ENCODE measurements at regions of chr1 and their contacts with region 1.

Region 1: DNA sequence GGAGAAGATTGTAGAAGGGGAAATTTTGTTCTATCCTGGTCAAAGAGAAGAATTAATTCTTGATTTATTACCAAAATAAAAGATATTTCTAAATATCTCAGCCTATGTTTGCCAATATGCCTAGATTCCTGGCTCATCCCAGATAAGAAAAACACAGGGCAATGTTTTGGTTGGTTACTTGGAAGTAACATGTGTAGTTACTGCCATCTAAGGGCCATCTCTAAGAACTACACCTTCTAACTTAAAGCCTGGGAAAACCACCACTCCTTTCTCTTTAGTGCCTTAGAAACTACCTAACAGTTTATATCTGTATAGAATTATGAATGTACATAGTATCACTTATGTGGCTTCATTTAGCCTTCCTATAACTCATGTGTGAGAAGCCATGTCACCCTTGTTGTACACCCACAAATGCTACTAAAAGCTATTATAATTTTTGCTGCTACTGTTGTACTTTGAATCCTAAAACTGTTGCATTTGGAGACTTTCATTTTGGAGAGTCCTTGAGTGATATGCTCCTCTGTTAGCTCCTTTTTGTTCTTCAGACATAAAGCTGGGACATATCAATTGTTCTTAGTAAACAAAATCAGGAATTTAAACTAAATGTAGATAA is 4.5 kb downstream of the AIM2 start:
- DNase-seq: peak; percentile 78
- H3K4me3 Mint-ChIP-seq: no peak overlapping the region
- H3K27ac Mint-ChIP-seq: no peak overlapping the region
- H3K4me1 Mint-ChIP-seq: no peaks in the 10 kb centered on the region
- H3K27me3 Mint-ChIP-seq: no peaks in the 10 kb centered on the region
- CTCF ChIP-seq: peak; percentile 91

Region 2: GRCh38 chr1:158506369-158506987 is 565.6 kb before region 1 on chr1:
- CTCF ChIA-PET with region 1: no interaction called
- POLR2A ChIA-PET with region 1: no interaction called
- intact Hi-C with region 1: loop called (anchors 1 kb)
- DNase-seq: peak; percentile 61
- H3K4me3 Mint-ChIP-seq: no peak overlapping the region
- H3K27ac Mint-ChIP-seq: no peak overlapping the region
- H3K4me1 Mint-ChIP-seq: no peaks in the 10 kb centered on the region
- H3K27me3 Mint-ChIP-seq: peaks cover 83% of the 10 kb centered on the region
- CTCF ChIP-seq: peak; percentile 63

Region 3: DNA sequence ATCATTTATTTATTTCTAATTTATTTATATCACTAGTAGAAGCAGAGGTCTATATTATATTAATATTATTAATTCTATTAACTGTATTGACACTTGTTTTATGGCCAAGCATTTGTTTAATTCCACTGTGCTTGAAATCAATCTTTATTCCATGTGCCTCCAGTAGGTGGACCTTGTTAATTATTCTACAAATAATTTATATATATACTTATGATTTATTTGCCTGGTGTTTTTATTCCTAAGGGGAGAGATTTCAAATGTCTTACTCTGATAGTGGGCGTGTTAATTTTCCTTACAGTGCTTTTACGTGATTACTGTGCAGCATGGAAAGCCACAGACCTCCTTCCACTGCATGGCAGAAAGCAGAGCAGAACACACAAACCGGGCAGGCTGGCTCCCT is 273.5 kb before region 1 on chr1:
- CTCF ChIA-PET with region 1: interaction called, 3 read pairs
- POLR2A ChIA-PET with region 1: interaction called, 3 read pairs
- intact Hi-C with region 1: loop called (anchors 5 kb)
- DNase-seq: no peak
- H3K4me3 Mint-ChIP-seq: no peak overlapping the region
- H3K27ac Mint-ChIP-seq: no peak overlapping the region
- H3K4me1 Mint-ChIP-seq: no peaks in the 10 kb centered on the region
- H3K27me3 Mint-ChIP-seq: peaks cover 89% of the 10 kb centered on the region
- CTCF ChIP-seq: peak; percentile 37

Region 4: GRCh38 chr1:159009704-159010361 is 62.2 kb before region 1 on chr1 and contains the start of gene IFI16:
- CTCF ChIA-PET with region 1: interaction called, 8 read pairs
- POLR2A ChIA-PET with region 1: interaction called, 18 read pairs
- intact Hi-C with region 1: no loop called
- DNase-seq: peak; percentile 99
- H3K4me3 Mint-ChIP-seq: peak within 1 kb of the TSS; percentile 88
- H3K27ac Mint-ChIP-seq: peak within 1 kb of the TSS; percentile 97
- H3K4me1 Mint-ChIP-seq: peaks cover 53% of the 10 kb centered on the region
- H3K27me3 Mint-ChIP-seq: no peaks in the 10 kb centered on the region
- CTCF ChIP-seq: no peak
- total RNA-seq, gene IFI16: 139 and 163 TPM in 2 replicates

Region 5: DNA sequence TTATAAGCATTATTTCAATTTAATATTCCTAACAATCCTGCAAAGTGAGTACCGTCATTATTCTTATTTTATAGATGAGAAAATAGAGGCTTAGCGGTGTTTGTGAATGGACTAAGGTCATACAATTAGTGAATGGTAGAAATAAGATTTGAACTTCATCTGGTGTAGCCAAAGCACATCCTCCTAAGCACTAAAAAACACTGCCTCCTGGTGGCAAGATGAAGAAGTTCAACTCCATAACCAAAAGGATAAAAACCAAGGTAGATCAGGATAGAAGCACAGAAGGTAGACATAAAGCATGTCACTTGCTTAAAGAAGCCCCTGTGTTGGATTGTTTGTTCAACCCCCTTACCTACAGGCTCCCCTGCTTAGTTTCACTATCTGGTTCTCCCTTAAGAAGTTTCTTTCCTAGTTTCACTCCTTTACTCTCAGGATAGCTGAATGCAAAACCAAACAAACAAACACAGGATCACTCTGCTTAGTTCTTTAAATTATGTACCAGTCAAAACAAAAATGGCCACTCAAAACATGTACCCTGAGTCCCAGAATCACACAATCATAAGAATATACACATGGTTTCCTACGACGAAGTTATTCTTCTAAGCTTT is 17.2 kb after region 1 on chr1:
- CTCF ChIA-PET with region 1: interaction called, 43 read pairs
- POLR2A ChIA-PET with region 1: no interaction called
- intact Hi-C with region 1: no loop called
- DNase-seq: peak; percentile 29
- H3K4me3 Mint-ChIP-seq: no peak overlapping the region
- H3K27ac Mint-ChIP-seq: no peak overlapping the region
- H3K4me1 Mint-ChIP-seq: peaks cover 32% of the 10 kb centered on the region
- H3K27me3 Mint-ChIP-seq: no peaks in the 10 kb centered on the region
- CTCF ChIP-seq: peak; percentile 52

Region 6: DNA sequence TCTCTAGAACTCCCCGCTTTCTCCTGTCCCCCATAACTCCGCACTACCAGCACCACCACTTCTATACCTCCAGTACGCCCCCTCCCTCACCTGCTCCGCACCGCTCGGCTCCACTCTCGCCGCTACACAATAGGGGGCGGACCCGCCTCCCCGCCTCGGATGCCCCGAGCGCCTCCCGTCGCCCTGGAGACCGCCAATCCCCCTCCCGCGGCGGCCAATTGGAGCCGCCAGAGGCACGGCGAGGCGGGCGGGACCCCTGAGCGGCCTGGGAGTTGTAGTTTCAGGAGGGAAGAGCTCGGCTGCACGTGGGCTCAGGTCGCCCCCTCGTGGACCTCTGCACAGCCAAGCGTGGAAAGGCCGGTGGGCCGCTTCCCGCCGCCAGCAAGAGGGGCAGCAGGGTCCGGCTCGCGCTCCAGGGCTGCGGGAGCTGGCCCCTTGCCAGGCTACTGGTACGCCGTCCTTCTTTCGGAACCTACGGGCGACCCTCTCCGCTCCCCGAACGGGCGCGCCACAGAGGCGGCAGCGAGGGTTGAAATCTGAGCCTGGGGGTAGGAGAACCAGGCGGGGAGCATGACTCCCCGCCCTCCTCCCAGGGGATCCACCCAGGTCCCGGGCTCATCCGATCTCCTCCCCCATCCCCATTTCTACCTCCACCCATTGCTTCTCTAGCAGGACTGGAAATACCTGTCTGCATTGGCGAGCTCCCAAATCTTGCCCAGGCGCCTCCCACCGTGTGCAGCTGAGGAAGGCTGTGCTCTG is 873.6 kb after region 1 on chr1 and contains the start of gene IGSF9:
- CTCF ChIA-PET with region 1: no interaction called
- POLR2A ChIA-PET with region 1: no interaction called
- intact Hi-C with region 1: no loop called
- DNase-seq: peak; percentile 86
- H3K4me3 Mint-ChIP-seq: peak within 1 kb of the TSS; percentile 69
- H3K27ac Mint-ChIP-seq: no peak within 1 kb of the TSS
- H3K4me1 Mint-ChIP-seq: peaks cover 45% of the 10 kb centered on the region
- H3K27me3 Mint-ChIP-seq: no peaks in the 10 kb centered on the region
- CTCF ChIP-seq: peak; percentile 37
- total RNA-seq, gene IGSF9: 0.25 and 0.44 TPM in 2 replicates

Measured in MCF 10A (cell line).